HCT116 (cell line): ENCODE measurements at regions of chr4 and their contacts with region 1.

Region 1: DNA sequence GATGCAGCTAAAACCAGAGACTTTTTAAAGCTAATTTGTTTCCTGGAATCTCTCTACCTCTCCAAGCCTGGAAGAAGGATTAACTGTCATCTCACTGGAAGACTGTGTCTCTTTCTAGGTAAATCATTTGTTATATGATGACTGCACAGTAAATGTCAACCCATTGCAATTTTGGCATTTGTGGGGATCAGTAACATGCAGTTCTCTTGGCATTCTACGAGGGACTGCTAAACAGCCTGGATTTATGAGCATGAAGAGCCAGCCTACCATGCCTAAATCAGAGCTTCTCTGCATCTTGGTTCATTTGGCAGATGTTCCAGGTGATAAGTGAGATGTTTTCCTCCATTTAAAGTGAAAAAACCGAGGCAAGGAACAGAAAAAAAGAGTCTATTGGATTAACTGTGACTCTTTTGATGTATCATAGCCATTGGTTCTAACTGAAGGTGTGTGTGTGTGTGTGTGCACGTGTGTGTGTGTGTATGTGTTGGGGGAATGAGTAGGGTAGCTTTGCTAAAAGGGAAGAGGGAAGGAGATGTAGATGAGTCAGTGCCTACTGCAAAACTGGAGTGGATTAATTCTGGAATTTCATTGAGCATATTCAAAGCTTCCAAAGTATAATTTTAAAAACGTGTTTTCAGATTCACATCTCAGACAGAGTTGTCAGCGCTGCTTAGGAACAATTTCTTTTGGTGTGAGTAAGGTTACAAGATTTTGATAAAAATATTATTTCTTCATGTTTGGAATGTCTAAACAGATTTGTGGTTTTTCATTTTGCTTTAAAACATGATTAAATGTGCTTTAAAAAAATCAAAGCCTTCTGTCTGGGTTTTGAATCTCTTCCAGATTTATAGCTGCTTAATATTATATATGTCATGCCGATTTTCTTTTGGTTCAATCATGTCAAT is 123.2 kb upstream of the LNX1 start:
- DNase-seq: no peak
- ATAC-seq: no peak
- H3K4me3 ChIP-seq: no peak overlapping the region
- H3K27ac ChIP-seq: no peak overlapping the region
- H3K4me1 ChIP-seq: no peaks in the 10 kb centered on the region
- H3K27me3 ChIP-seq: peaks cover 28% of the 10 kb centered on the region
- CTCF ChIP-seq: no peak
- POLR2A ChIP-seq: no peak
- RAD21 ChIP-seq: no peak

Region 2: DNA sequence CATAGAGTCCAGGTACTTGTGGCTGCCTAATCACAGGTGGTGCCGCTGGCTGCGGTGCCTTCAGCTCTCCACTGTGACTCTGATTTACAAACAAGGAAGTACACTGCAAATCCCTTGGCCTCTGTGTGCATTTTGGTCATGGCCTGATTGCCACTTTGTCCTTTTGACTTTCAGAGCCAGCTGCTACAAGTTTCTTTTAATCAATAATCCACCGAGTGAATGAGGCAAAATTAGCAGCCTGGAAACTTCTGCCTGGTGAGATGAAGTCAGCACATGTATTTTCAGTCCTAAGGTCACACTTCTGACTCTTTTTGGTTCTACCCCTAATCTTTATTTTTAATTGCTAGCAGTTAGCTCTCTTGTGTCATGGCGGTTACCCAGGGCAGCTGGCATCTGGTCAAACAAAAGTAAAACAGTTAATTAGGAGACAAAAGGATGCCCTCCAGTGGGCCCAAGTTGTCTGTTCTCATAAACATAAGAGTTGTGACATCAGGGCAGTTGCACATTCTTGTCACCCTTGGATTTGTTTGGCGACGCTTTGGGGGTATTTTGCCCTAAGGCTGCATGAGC is 60.9 kb before region 1 on chr4:
- CTCF ChIA-PET with region 1: no interaction called
- POLR2A ChIA-PET with region 1: no interaction called
- RAD21 ChIA-PET with region 1: no interaction called
- intact Hi-C with region 1: loop called (anchors 10 kb)
- DNase-seq: no peak
- ATAC-seq: no peak
- H3K4me3 ChIP-seq: no peak overlapping the region
- H3K27ac ChIP-seq: no peak overlapping the region
- H3K4me1 ChIP-seq: peaks cover 0 to 7% of the 10 kb centered on the region in 2 experiments; a peak in 1 of 4 replicates
- H3K27me3 ChIP-seq: no peaks in the 10 kb centered on the region
- CTCF ChIP-seq: 0 out of 6 replicates have a peak, but pooled peaks of 2 of the 3 experiments have one; percentile 9 to 11
- POLR2A ChIP-seq: no peak
- RAD21 ChIP-seq: peak; percentile 30; the same call in 1 of the 2 replicates

Region 3: GRCh38 chr4:53702334-53703266 is 11.9 kb before region 1 on chr4:
- CTCF ChIA-PET with region 1: interaction called, 10 read pairs
- POLR2A ChIA-PET with region 1: no interaction called
- RAD21 ChIA-PET with region 1: no interaction called
- intact Hi-C with region 1: no loop called
- DNase-seq: no peak
- ATAC-seq: peak; percentile 75
- H3K4me3 ChIP-seq: peak overlapping the region; percentile 21 to 38
- H3K27ac ChIP-seq: no peak overlapping the region
- H3K4me1 ChIP-seq: peaks cover 12 to 15% of the 10 kb centered on the region in 2 experiments
- H3K27me3 ChIP-seq: no peaks in the 10 kb centered on the region; the same call in 1 of the 2 replicates
- CTCF ChIP-seq: peak in 1 of 3 experiments; percentile 22; a peak in 2 of 6 replicates
- POLR2A ChIP-seq: no peak
- RAD21 ChIP-seq: no peak